CD8-positive, alpha-beta memory T cell (primary cell): ENCODE measurements at regions of chr9 and their contacts with region 1.

Region 1: GRCh38 chr9:133144137-133144903 is 19.4 kb downstream of the GBGT1 start:
- DNase-seq: peak; percentile 91 to 99 (median 94)
- H3K4me3 ChIP-seq: peak overlapping the region; percentile 22
- H3K4me3 Mint-ChIP-seq: peak overlapping the region; percentile 79 to 89 (median 81)
- H3K27ac ChIP-seq: peak overlapping the region; percentile 85
- H3K27ac Mint-ChIP-seq: peak overlapping the region; percentile 91 to 100 (median 98)
- H3K4me1 ChIP-seq: peaks cover 66% of the 10 kb centered on the region
- H3K4me1 Mint-ChIP-seq: peaks cover 63 to 84% (median 64%) of the 10 kb centered on the region in 3 donors
- H3K27me3 ChIP-seq: no peaks in the 10 kb centered on the region
- H3K27me3 Mint-ChIP-seq: no peaks in the 10 kb centered on the region

Region 2: GRCh38 chr9:133023117-133023890 is 121.0 kb before region 1 on chr9:
- CTCF ChIA-PET with region 1: interaction called, 20 read pairs
- POLR2A ChIA-PET with region 1: no interaction called
- DNase-seq: peak in 2 of 5 donors; percentile 18 to 58
- H3K4me3 ChIP-seq: no peak overlapping the region
- H3K4me3 Mint-ChIP-seq: no peak overlapping the region
- H3K27ac ChIP-seq: no peak overlapping the region
- H3K27ac Mint-ChIP-seq: no peak overlapping the region
- H3K4me1 ChIP-seq: no peaks in the 10 kb centered on the region
- H3K4me1 Mint-ChIP-seq: peaks cover 10 to 17% (median 11%) of the 10 kb centered on the region in 3 donors
- H3K27me3 ChIP-seq: no peaks in the 10 kb centered on the region
- H3K27me3 Mint-ChIP-seq: peaks cover 0 to 5% of the 10 kb centered on the region in 2 donors

Region 3: DNA sequence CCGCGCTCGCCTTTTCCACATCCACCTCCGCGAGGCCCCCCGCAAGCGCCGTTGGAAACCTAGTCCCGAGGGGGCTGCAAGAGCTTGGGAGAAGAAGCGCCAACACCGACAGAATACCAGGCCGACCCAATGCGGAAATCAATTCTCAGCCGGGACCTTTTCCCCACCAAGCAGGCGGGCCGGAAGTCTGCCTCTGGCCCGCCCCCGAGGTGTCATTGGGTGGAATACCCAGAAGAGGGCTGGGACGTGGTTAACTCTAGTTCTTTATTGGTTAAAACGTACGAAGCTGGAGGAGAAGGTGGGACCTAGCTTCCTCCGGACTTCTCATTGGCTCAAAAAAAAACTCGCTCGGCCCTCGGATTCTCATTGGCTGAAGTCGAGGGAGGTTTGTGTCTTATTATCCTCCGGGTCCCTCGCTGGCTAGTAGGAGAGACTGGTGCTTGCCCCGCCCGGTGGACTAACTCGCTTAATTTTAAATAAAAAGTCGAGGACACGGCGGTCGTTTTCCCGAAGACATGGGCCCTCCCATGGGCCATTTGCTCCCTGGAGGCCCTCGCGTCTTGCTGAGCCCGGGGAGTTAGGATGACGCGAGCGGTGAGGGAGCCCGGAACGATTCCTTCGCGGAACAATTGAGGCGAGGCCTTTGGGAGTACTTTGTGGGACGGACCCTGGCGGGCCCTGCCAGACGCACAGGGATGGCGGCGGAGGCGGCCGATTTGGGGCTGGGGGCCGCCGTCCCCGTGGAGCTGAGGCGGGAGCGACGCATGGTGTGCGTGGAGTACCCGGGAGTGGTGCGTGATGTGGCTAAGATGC is 113.8 kb before region 1 on chr9 and contains the start of gene GTF3C5:
- CTCF ChIA-PET with region 1: interaction called, 33 read pairs
- POLR2A ChIA-PET with region 1: interaction called, 20 read pairs
- DNase-seq: peak; percentile 88 to 95 (median 94)
- H3K4me3 ChIP-seq: peak within 1 kb of the TSS; percentile 72
- H3K4me3 Mint-ChIP-seq: peak within 1 kb of the TSS; percentile 94 to 99 (median 96)
- H3K27ac ChIP-seq: peak within 1 kb of the TSS; percentile 87
- H3K27ac Mint-ChIP-seq: peak within 1 kb of the TSS; percentile 95 to 100 (median 97)
- H3K4me1 ChIP-seq: peaks cover 26% of the 10 kb centered on the region
- H3K4me1 Mint-ChIP-seq: peaks cover 49 to 76% (median 59%) of the 10 kb centered on the region in 3 donors
- H3K27me3 ChIP-seq: no peaks in the 10 kb centered on the region
- H3K27me3 Mint-ChIP-seq: peaks cover 0 to 1% of the 10 kb centered on the region in 2 donors
- total RNA-seq, gene GTF3C5: 87.8 to 91.8 TPM

Region 4: DNA sequence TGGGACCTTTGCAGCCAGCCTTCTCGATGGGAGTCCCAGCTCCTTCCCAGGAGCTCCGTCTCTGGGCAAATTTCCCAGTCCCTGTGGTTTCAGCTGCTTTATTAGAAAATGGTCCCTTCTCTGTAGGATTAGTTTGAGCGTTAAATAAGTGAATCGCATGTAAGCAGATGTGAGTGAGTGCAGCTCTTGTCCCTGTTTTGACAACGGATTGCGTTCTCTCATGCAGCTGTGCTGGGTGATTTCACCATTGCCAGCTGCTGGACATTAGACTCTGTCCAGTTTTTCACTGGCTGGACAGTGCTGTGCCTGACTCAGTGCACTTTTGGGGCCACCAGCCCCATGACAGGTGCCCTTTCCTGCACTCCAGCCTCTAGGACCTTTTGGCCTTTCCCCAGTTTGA is 94.2 kb before region 1 on chr9:
- CTCF ChIA-PET with region 1: interaction called, 11 read pairs
- POLR2A ChIA-PET with region 1: no interaction called
- DNase-seq: no peak
- H3K4me3 ChIP-seq: no peak overlapping the region
- H3K4me3 Mint-ChIP-seq: no peak overlapping the region
- H3K27ac ChIP-seq: no peak overlapping the region
- H3K27ac Mint-ChIP-seq: no peak overlapping the region
- H3K4me1 ChIP-seq: no peaks in the 10 kb centered on the region
- H3K4me1 Mint-ChIP-seq: no peaks in the 10 kb centered on the region
- H3K27me3 ChIP-seq: no peaks in the 10 kb centered on the region
- H3K27me3 Mint-ChIP-seq: peaks cover 0 to 1% of the 10 kb centered on the region in 2 donors

Region 5: GRCh38 chr9:133133681-133134418 is 10.5 kb before region 1 on chr9:
- CTCF ChIA-PET with region 1: interaction called, 220 read pairs
- POLR2A ChIA-PET with region 1: interaction called, 67 read pairs
- DNase-seq: peak; percentile 85 to 97 (median 88)
- H3K4me3 ChIP-seq: peak overlapping the region; percentile 35
- H3K4me3 Mint-ChIP-seq: peak overlapping the region; percentile 76 to 96 (median 84)
- H3K27ac ChIP-seq: peak overlapping the region; percentile 100
- H3K27ac Mint-ChIP-seq: peak overlapping the region; percentile 100
- H3K4me1 ChIP-seq: peaks cover 88% of the 10 kb centered on the region
- H3K4me1 Mint-ChIP-seq: peaks cover 62 to 83% (median 66%) of the 10 kb centered on the region in 3 donors
- H3K27me3 ChIP-seq: no peaks in the 10 kb centered on the region
- H3K27me3 Mint-ChIP-seq: peaks cover 0 to 2% of the 10 kb centered on the region in 2 donors

Region 6: DNA sequence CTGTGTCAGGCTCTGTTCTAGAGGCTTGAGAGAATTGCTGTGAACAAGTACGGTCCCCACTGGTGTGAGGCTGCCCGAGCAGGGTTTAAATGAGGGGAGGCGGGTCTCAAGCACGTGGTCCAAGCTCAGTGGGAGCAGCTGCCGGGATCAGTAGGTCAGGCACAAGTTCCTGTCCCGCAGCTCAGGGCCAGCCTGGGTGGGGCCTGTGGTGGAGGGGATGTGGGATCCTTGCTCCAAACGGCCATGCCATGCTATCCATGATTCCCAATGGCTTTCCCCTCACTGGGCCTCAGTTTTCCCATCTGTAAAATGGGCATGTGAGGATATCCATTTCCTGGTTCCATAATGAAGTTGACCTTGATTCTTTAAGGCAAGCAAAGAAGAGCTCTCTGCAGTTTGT is 47.7 kb after region 1 on chr9:
- CTCF ChIA-PET with region 1: no interaction called
- POLR2A ChIA-PET with region 1: no interaction called
- DNase-seq: no peak
- H3K4me3 ChIP-seq: no peak overlapping the region
- H3K4me3 Mint-ChIP-seq: no peak overlapping the region
- H3K27ac ChIP-seq: no peak overlapping the region
- H3K27ac Mint-ChIP-seq: no peak overlapping the region
- H3K4me1 ChIP-seq: no peaks in the 10 kb centered on the region
- H3K4me1 Mint-ChIP-seq: no peaks in the 10 kb centered on the region
- H3K27me3 ChIP-seq: no peaks in the 10 kb centered on the region
- H3K27me3 Mint-ChIP-seq: peaks cover 13 to 39% of the 10 kb centered on the region in 2 donors

Region 7: GRCh38 chr9:133309608-133310007 is 165.3 kb after region 1 on chr9:
- CTCF ChIA-PET with region 1: no interaction called
- POLR2A ChIA-PET with region 1: no interaction called
- DNase-seq: no peak
- H3K4me3 ChIP-seq: no peak overlapping the region
- H3K4me3 Mint-ChIP-seq: no peak overlapping the region
- H3K27ac ChIP-seq: no peak overlapping the region
- H3K27ac Mint-ChIP-seq: no peak overlapping the region
- H3K4me1 ChIP-seq: no peaks in the 10 kb centered on the region
- H3K4me1 Mint-ChIP-seq: no peaks in the 10 kb centered on the region
- H3K27me3 ChIP-seq: no peaks in the 10 kb centered on the region
- H3K27me3 Mint-ChIP-seq: peaks cover 17 to 25% of the 10 kb centered on the region in 2 donors

Region 8: GRCh38 chr9:133387425-133388079 is 243.2 kb after region 1 on chr9:
- CTCF ChIA-PET with region 1: no interaction called
- POLR2A ChIA-PET with region 1: no interaction called
- DNase-seq: no peak
- H3K4me3 ChIP-seq: no peak overlapping the region
- H3K4me3 Mint-ChIP-seq: no peak overlapping the region
- H3K27ac ChIP-seq: no peak overlapping the region
- H3K27ac Mint-ChIP-seq: no peak overlapping the region
- H3K4me1 ChIP-seq: no peaks in the 10 kb centered on the region
- H3K4me1 Mint-ChIP-seq: no peaks in the 10 kb centered on the region
- H3K27me3 ChIP-seq: peaks cover 3% of the 10 kb centered on the region
- H3K27me3 Mint-ChIP-seq: peaks cover 8% of the 10 kb centered on the region in 2 donors